ENCODE measurements at regions of chr9 and their contacts with region 1.

Region 1: GRCh38 chr9:22976454-22976853 is 529.8 kb downstream of the DMRTA1 start:
- DNase-seq: no peak
- H3K4me3 Mint-ChIP-seq: no peak overlapping the region
- H3K27ac Mint-ChIP-seq: no peak overlapping the region
- H3K4me1 Mint-ChIP-seq: no peaks in the 10 kb centered on the region
- H3K27me3 Mint-ChIP-seq: no peaks in the 10 kb centered on the region

Region 2: DNA sequence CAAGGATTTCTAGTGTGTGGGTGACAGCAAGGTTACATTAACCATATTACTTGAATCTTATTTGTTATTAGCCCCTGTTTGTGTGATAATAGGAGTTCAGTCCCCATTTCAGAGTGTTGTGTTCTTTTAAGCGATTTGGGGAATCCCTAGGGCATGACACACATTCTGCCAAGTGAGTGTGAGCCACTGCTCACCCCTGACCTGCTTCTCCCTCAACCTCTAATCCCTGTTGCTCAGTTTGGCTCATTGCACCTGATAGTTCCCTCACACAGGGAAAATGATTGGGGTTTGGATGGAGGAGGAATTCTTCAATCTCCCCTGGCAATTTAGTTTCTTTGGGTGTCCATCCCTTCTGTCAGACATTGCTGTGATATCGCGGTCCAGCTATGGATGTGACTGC is 380.6 kb before region 1 on chr9:
- intact Hi-C with region 1: no loop called
- DNase-seq: no peak
- H3K4me3 Mint-ChIP-seq: no peak overlapping the region
- H3K27ac Mint-ChIP-seq: no peak overlapping the region
- H3K4me1 Mint-ChIP-seq: no peaks in the 10 kb centered on the region
- H3K27me3 Mint-ChIP-seq: no peaks in the 10 kb centered on the region

Region 3: GRCh38 chr9:22718653-22719052 is 257.8 kb before region 1 on chr9:
- intact Hi-C with region 1: no loop called
- DNase-seq: no peak
- H3K4me3 Mint-ChIP-seq: no peak overlapping the region
- H3K27ac Mint-ChIP-seq: no peak overlapping the region
- H3K4me1 Mint-ChIP-seq: no peaks in the 10 kb centered on the region
- H3K27me3 Mint-ChIP-seq: no peaks in the 10 kb centered on the region

Region 4: DNA sequence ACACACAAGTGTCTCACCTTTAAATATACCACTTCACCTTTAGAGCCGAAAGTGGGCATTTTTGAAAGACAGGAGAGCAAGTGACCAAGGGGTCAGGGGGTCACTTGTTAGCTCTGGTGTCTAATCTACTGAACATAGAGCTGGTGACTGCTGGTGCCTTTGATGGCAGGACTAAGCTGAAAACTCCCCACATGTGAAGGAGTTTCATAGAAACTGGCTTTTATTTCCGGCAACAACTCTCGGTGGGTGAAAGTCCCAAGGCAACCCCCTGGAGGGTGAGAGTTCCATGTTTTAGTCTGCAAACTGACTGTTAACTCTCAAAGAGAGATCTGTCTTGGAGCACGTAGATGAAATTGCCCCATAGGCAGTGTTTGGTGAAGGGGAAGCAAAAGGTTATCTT is 62.9 kb before region 1 on chr9:
- intact Hi-C with region 1: loop called (anchors 10 kb)
- DNase-seq: no peak
- H3K4me3 Mint-ChIP-seq: no peak overlapping the region
- H3K27ac Mint-ChIP-seq: no peak overlapping the region
- H3K4me1 Mint-ChIP-seq: no peaks in the 10 kb centered on the region
- H3K27me3 Mint-ChIP-seq: no peaks in the 10 kb centered on the region

Region 5: DNA sequence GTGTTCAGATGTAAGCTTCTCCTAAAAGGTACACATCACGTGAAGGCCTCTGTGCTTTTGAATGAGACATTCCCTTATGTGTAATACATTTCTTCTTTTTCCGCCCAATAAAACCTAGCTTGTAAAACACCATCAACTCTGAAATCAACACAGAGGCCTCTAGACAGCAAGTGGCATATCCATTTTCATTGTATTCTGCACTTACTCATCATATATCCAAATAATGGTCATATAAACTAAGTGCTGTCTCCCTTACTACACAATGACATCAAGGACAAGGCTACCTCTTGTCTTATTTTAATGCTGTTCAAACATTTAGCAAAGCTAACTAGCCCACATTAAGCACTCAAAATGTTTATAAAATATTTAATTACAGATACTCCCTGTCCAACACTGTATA is 741.1 kb after region 1 on chr9:
- intact Hi-C with region 1: no loop called
- DNase-seq: no peak
- H3K4me3 Mint-ChIP-seq: no peak overlapping the region
- H3K27ac Mint-ChIP-seq: no peak overlapping the region
- H3K4me1 Mint-ChIP-seq: no peaks in the 10 kb centered on the region
- H3K27me3 Mint-ChIP-seq: no peaks in the 10 kb centered on the region